ENCODE measurements at regions of chr11 and their contacts with region 1.

Region 1: GRCh38 chr11:72091005-72091691 is 10.5 kb downstream of the LRRC51 start:
- DNase-seq: no peak
- H3K4me3 ChIP-seq: no peak overlapping the region
- H3K27ac ChIP-seq: peak overlapping the region; percentile 44
- H3K4me1 ChIP-seq: peaks cover 11% of the 10 kb centered on the region
- H3K27me3 ChIP-seq: no peaks in the 10 kb centered on the region
- CTCF ChIP-seq: peak; percentile 76 to 85 (median 80)
- POLR2A ChIP-seq: no peak

Region 2: DNA sequence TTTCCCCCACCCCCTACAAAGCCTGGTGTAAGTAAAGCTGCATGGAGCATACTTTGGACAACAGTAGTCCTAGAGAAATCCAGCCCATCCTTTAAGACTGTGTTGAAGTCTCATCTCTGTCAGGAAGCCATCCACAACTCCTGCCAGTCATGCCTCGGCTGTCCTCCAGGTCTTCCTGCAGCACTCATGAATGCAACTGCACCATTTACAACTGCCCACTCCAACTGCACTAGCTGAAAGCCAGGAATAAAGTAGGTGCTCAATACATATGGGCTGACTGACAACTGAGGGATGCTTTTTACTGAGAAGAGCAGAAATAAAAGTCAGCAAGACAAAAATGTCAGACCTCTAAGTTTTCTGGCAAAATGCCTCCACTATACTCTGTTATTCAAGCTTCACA is 65.1 kb before region 1 on chr11:
- intact Hi-C with region 1: loop called (anchors 5 kb)
- DNase-seq: no peak
- H3K4me3 ChIP-seq: no peak overlapping the region
- H3K27ac ChIP-seq: peak overlapping the region; percentile 69
- H3K4me1 ChIP-seq: peaks cover 72% of the 10 kb centered on the region
- H3K27me3 ChIP-seq: no peaks in the 10 kb centered on the region
- CTCF ChIP-seq: no peak
- POLR2A ChIP-seq: no peak

Measured in vagina (tissue), 2 donors.